ENCODE measurements at regions of chr7 and their contacts with region 1.

Region 1: GRCh38 chr7:156751319-156751718 is 110.7 kb downstream of the RNF32 start:
- DNase-seq: peak; percentile 79
- H3K4me3 Mint-ChIP-seq: no peak overlapping the region
- H3K27ac Mint-ChIP-seq: peak overlapping the region; percentile 11
- H3K4me1 Mint-ChIP-seq: peaks cover 14% of the 10 kb centered on the region
- H3K27me3 Mint-ChIP-seq: no peaks in the 10 kb centered on the region

Region 2: GRCh38 chr7:156731651-156732050 is 19.7 kb before region 1 on chr7:
- CTCF ChIA-PET with region 1: no interaction called
- POLR2A ChIA-PET with region 1: no interaction called
- intact Hi-C with region 1: loop called (anchors 2 kb)
- DNase-seq: no peak
- H3K4me3 Mint-ChIP-seq: no peak overlapping the region
- H3K27ac Mint-ChIP-seq: no peak overlapping the region
- H3K4me1 Mint-ChIP-seq: no peaks in the 10 kb centered on the region
- H3K27me3 Mint-ChIP-seq: no peaks in the 10 kb centered on the region

Region 3: DNA sequence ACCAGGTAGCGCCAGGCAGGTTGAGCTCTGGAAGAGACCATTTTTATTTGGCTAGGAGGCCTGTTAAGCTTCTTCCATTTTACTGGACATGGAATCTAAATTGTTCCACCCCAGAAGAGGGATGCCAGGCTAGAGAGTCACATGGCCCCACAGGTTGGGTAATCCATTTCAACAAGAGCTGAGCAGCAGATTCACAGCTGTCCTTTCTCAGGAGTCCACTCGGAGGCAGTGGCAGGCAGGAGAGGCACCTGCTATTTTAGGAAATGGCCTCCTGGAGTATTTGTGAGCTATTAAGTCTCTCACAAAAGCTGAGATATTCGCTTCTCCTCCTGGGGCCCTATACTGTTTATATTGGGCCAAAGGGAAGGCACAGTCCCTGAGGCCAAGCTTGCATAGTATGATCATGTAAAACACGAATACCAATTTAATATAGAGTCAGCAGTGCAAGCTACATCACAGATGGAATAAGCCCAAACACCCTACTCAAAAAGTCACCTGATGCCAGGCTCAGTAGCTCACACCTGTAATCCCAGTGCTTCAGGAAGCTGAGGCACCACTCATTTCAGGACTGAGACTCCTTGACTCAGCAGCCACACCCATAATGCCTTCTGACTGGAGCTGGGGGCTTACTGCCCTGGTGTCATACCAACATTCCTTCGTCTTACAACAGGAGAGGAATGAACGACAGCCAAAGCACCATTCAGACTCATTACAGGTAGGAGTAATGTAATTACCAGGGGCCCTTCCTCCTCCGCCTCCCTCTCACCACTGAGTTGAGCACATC is 17.6 kb after region 1 on chr7:
- CTCF ChIA-PET with region 1: no interaction called
- POLR2A ChIA-PET with region 1: no interaction called
- intact Hi-C with region 1: loop called (anchors 1 kb)
- DNase-seq: peak; percentile 65
- H3K4me3 Mint-ChIP-seq: no peak overlapping the region
- H3K27ac Mint-ChIP-seq: no peak overlapping the region
- H3K4me1 Mint-ChIP-seq: peaks cover 28% of the 10 kb centered on the region
- H3K27me3 Mint-ChIP-seq: no peaks in the 10 kb centered on the region

Region 4: DNA sequence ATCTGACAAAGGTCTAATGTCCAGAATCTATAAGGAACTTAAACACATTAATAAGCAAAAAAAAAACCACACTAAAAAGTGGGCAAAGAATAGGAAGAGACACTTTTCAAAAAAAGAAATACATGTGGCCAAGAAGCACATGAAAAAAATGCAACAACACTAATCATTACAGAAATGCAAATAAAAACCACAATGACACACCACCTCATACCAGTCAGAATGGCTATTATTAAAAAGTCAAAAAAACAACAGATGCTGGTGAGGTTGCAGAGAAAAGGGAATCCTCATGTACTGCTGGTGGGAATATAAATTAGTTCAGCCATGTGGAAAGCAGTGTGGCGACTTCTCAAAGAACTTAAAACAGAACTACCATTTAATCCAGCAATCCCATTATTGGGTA is 22.6 kb after region 1 on chr7:
- CTCF ChIA-PET with region 1: interaction called, 4 read pairs
- POLR2A ChIA-PET with region 1: no interaction called
- intact Hi-C with region 1: loop called (anchors 1 kb)
- DNase-seq: no peak
- H3K4me3 Mint-ChIP-seq: no peak overlapping the region
- H3K27ac Mint-ChIP-seq: peak overlapping the region; percentile 9
- H3K4me1 Mint-ChIP-seq: peaks cover 58% of the 10 kb centered on the region
- H3K27me3 Mint-ChIP-seq: no peaks in the 10 kb centered on the region

Measured in activated CD4-positive, alpha-beta memory T cell treated with anti-CD3 and anti-CD28 coated beads for 36 hours (primary cell).